Endothelial cell of umbilical vein (primary cell): ENCODE measurements at regions of chr11 and their contacts with region 1.

Region 1: GRCh38 chr11:62905927-62906531 is 15.1 kb downstream of the CHRM1 start:
- DNase-seq: peak; percentile 86
- H3K4me3 ChIP-seq: no peak overlapping the region
- H3K27ac ChIP-seq: no peak overlapping the region
- H3K4me1 ChIP-seq: peaks cover 7% of the 10 kb centered on the region
- H3K27me3 ChIP-seq: peaks cover 0 to 2% of the 10 kb centered on the region in 2 experiments
- CTCF ChIP-seq: peak; percentile 97
- POLR2A ChIP-seq: no peak

Region 2: GRCh38 chr11:62889484-62890437 is 16.3 kb before region 1 on chr11:
- CTCF ChIA-PET with region 1: interaction called, 15 read pairs
- POLR2A ChIA-PET with region 1: no interaction called
- dilution Hi-C with region 1: no loop called
- intact Hi-C with region 1: no loop called
- DNase-seq: peak; percentile 92
- H3K4me3 ChIP-seq: no peak overlapping the region
- H3K27ac ChIP-seq: no peak overlapping the region
- H3K4me1 ChIP-seq: peaks cover 31% of the 10 kb centered on the region
- H3K27me3 ChIP-seq: no peaks in the 10 kb centered on the region
- CTCF ChIP-seq: no peak
- POLR2A ChIP-seq: peak; percentile 94

Region 3: GRCh38 chr11:62974848-62975522 is 69.0 kb after region 1 on chr11:
- CTCF ChIA-PET with region 1: interaction called, 44 read pairs
- POLR2A ChIA-PET with region 1: no interaction called
- dilution Hi-C with region 1: no loop called
- intact Hi-C with region 1: loop called (anchors 1 kb)
- DNase-seq: peak; percentile 15
- H3K4me3 ChIP-seq: no peak overlapping the region
- H3K27ac ChIP-seq: no peak overlapping the region
- H3K4me1 ChIP-seq: no peaks in the 10 kb centered on the region
- H3K27me3 ChIP-seq: no peaks in the 10 kb centered on the region
- CTCF ChIP-seq: peak; percentile 28 to 56
- POLR2A ChIP-seq: no peak

Region 4: DNA sequence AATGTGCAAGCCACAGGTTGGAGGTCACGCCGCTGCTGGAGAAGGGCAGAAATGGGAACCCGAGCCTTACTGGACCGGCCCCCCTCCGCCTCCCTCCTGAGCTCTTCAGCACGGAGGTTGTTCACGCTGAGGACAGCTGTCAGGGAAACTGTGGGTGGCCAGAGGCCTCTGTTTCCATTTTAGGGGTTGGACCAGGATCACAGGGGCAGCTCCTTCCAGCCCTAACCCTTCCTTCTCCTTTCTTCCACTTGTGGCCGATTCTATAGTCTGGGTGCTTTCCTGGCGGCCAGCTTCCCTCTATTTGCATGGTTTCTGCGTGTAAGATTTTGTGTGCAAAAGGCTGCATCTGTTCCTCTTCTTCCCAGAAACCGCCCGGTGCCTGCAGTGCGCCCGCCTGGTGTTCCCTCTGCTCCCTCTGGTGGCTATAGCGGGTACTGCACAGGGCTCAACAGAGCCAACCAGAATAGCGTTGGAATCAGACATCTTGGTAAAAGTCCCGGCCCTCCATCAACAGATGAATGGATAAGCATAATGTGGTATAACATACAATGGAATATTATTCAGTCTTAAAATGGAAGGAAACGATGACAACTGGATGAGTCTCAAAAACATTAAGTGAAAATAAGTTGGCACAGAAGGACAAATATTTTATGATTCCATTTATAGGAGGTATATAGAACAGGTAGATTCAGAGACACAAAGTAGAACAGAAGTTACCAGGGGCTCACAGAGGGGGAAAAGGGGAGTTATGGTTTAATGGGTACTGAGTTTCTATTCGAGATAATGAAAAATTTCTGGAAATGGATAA is 118.0 kb after region 1 on chr11:
- CTCF ChIA-PET with region 1: interaction called, 488 read pairs
- POLR2A ChIA-PET with region 1: no interaction called
- dilution Hi-C with region 1: no loop called
- intact Hi-C with region 1: loop called (anchors 1 kb)
- DNase-seq: peak; percentile 69
- H3K4me3 ChIP-seq: no peak overlapping the region
- H3K27ac ChIP-seq: no peak overlapping the region
- H3K4me1 ChIP-seq: no peaks in the 10 kb centered on the region
- H3K27me3 ChIP-seq: peaks cover 4 to 10% of the 10 kb centered on the region in 2 experiments
- CTCF ChIP-seq: peak; percentile 98 to 99
- POLR2A ChIP-seq: no peak

Region 5: DNA sequence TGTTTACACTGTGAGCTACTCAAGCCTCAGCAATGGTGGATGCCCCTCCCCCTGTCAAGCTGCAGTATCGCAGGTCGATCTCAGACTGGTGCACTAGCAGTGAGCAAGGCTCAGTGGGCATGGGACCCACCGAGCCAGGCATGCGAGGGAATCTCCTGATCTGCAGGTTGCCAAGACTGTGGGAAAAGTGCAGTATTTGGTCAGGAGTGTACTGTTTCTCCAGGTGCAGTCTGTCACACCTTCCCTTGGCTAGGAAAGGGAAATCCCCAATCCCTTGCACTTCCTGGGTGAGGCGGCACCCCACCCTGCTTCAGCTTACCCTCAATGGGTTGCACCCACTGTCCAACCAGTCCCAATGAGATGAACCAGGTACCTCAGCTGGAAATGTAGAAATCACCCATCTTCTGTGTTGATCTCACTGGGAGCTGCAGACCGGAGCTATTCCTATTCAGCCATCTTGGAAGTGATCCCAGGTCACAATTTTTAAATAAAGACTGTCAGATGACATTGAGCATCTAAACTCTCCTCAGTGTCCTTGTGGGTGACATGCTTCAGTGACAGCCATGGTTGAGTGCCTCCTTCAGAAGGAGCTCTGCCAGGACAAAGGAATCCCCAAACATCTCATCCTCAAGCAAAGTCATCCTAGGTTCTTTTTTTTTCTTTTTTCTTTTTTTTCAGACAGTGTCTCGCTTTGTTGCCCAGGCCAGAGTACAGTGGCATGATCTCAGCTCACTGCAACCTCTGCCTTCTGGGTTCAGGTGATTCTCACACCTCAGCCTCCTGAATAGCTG is 227.2 kb after region 1 on chr11:
- CTCF ChIA-PET with region 1: interaction called, 12 read pairs
- POLR2A ChIA-PET with region 1: no interaction called
- dilution Hi-C with region 1: no loop called
- intact Hi-C with region 1: loop called (anchors 5 kb)
- DNase-seq: no peak
- H3K4me3 ChIP-seq: no peak overlapping the region
- H3K27ac ChIP-seq: no peak overlapping the region
- H3K4me1 ChIP-seq: no peaks in the 10 kb centered on the region
- H3K27me3 ChIP-seq: peaks cover 9 to 11% of the 10 kb centered on the region in 2 experiments
- CTCF ChIP-seq: no peak
- POLR2A ChIP-seq: no peak

Region 6: DNA sequence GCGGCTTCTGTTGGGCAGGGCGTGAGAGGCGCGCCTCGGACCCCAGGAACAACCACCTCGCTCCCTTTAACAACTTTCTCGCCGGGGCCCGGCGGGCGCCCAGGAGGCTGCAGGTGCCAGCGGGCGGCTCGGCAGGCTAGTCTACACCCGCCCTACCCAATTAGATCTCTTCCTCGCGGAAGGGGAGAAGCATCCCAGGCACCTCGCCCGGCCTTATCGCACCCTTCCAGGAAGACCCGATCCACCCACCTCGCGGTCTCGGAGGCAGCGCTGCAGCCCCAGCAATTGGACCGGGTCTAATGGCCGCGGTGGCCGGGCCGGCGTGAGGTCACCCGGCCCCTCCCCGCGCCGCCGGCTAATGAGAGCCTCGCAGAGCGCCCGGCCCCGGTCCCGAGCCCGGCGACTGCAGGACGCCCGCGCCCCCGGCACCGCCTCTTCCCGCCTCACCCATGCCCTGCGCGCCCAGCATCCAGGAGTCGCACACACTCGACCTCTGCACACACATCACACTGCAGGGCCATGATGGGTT is 708.2 kb after region 1 on chr11 and contains the start of gene PLAAT3:
- CTCF ChIA-PET with region 1: no interaction called
- POLR2A ChIA-PET with region 1: no interaction called
- dilution Hi-C with region 1: no loop called
- intact Hi-C with region 1: loop called (anchors 10 kb)
- DNase-seq: peak; percentile 58
- H3K4me3 ChIP-seq: peak within 1 kb of the TSS; percentile 44 to 65 (median 51)
- H3K27ac ChIP-seq: peak within 1 kb of the TSS; percentile 54
- H3K4me1 ChIP-seq: peaks cover 17% of the 10 kb centered on the region
- H3K27me3 ChIP-seq: no peaks in the 10 kb centered on the region
- CTCF ChIP-seq: no peak
- POLR2A ChIP-seq: no peak
- total RNA-seq, gene PLAAT3: 22.8 and 24.2 TPM in 2 replicates